B cell (primary cell): ENCODE measurements at regions of chr17 and their contacts with region 1.

Region 1: DNA sequence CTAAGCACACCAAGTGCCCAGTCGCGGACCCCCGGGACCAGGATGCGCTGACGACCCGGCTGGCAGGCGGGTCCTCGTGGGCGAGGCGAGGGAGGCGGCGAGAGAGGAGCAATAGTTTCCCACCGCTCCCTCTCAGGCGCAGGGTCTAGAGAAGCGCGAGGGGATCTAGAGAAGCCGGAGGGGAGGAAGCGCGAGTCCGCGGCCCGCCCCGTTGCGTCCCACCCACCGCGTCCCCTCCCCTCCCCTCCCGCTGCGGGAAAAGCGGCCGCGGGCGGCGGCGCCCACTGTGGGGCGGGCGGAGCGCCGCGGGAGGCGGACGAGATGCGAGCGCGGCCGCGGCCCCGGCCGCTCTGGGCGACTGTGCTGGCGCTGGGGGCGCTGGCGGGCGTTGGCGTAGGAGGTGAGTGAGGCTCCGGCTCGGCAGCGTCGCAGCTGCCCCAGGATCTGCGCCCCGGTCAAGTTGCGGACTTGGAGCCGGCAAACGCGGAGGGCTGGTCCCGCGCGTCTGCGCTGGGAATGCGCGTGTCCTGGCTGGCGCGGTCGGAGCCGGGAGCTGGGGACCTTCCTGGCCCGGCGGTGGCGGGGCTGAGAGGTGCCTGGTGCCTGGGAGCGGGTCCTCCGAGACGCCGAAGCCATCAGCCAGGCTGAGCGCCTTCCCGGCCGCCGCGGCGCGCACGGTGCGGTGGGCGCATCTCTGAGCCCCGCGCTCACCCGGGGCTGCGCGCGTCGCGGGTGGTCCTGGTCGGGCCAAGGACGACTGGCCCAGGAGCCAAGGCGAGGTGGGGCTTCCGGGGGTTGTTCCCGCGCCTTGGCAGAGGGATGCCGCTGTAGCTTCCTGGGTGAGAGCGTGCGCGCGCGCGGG is at the start of gene ITGB3:
- DNase-seq: peak; percentile 88
- ATAC-seq: peak; percentile 98
- H3K4me3 ChIP-seq: peak within 1 kb of the TSS in 4 of 5 experiments; percentile 54 to 71 (median 62)
- H3K4me3 Mint-ChIP-seq: peak within 1 kb of the TSS; percentile 94
- H3K27ac ChIP-seq: no peak within 1 kb of the TSS
- H3K27ac Mint-ChIP-seq: peak within 1 kb of the TSS; percentile 61
- H3K4me1 ChIP-seq: peaks cover 4 to 18% of the 10 kb centered on the region in 2 donors
- H3K4me1 Mint-ChIP-seq: peaks cover 17% of the 10 kb centered on the region
- H3K27me3 ChIP-seq: peaks cover 0 to 11% (median 3%) of the 10 kb centered on the region in 4 experiments
- H3K27me3 Mint-ChIP-seq: peaks cover 7% of the 10 kb centered on the region
- CTCF ChIP-seq: peak; percentile 67
- total RNA-seq, gene ITGB3: 11.4 and 14.2 TPM in 2 replicates

Region 2: GRCh38 chr17:47279062-47279736 is 25.4 kb after region 1 on chr17:
- CTCF ChIA-PET with region 1: interaction called, 3 read pairs
- POLR2A ChIA-PET with region 1: no interaction called
- intact Hi-C with region 1: loop called (anchors 2 kb)
- DNase-seq: peak; percentile 85
- ATAC-seq: peak; percentile 94
- H3K4me3 ChIP-seq: peak overlapping the region in 3 of 5 experiments; percentile 4 to 30 (median 20)
- H3K4me3 Mint-ChIP-seq: peak overlapping the region; percentile 77
- H3K27ac ChIP-seq: peak overlapping the region; percentile 66 to 77
- H3K27ac Mint-ChIP-seq: peak overlapping the region; percentile 84
- H3K4me1 ChIP-seq: peaks cover 45 to 67% of the 10 kb centered on the region in 2 donors
- H3K4me1 Mint-ChIP-seq: peaks cover 69% of the 10 kb centered on the region
- H3K27me3 ChIP-seq: no peaks in the 10 kb centered on the region
- H3K27me3 Mint-ChIP-seq: no peaks in the 10 kb centered on the region
- CTCF ChIP-seq: no peak

Region 3: GRCh38 chr17:47335101-47335936 is 81.5 kb after region 1 on chr17:
- CTCF ChIA-PET with region 1: no interaction called
- POLR2A ChIA-PET with region 1: no interaction called
- intact Hi-C with region 1: no loop called
- DNase-seq: no peak
- ATAC-seq: no peak
- H3K4me3 ChIP-seq: no peak overlapping the region
- H3K4me3 Mint-ChIP-seq: no peak overlapping the region
- H3K27ac ChIP-seq: no peak overlapping the region
- H3K27ac Mint-ChIP-seq: no peak overlapping the region
- H3K4me1 ChIP-seq: no peaks in the 10 kb centered on the region
- H3K4me1 Mint-ChIP-seq: no peaks in the 10 kb centered on the region
- H3K27me3 ChIP-seq: no peaks in the 10 kb centered on the region
- H3K27me3 Mint-ChIP-seq: no peaks in the 10 kb centered on the region
- CTCF ChIP-seq: no peak

Region 4: DNA sequence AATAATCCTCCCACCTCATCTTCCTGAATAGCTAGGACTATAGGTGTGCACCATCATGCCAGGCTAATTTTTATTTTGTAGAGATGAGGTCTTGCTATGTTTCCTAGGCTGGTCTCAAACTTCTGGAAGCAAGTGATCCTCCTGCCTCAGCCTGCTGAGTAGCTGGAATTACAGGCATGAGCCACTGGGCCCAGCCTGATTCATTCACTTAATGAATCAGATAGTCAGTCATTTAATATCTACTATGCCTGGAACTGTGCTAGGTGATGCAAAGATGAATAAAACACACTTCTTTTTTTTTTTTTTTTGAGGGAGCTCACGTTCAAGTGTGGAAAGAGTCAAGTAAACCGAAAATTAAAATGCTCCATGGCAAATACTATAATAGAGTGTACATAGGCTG is 109.4 kb after region 1 on chr17:
- CTCF ChIA-PET with region 1: no interaction called
- POLR2A ChIA-PET with region 1: no interaction called
- intact Hi-C with region 1: no loop called
- DNase-seq: no peak
- ATAC-seq: no peak
- H3K4me3 ChIP-seq: no peak overlapping the region
- H3K4me3 Mint-ChIP-seq: no peak overlapping the region
- H3K27ac ChIP-seq: no peak overlapping the region
- H3K27ac Mint-ChIP-seq: no peak overlapping the region
- H3K4me1 ChIP-seq: no peaks in the 10 kb centered on the region
- H3K4me1 Mint-ChIP-seq: no peaks in the 10 kb centered on the region
- H3K27me3 ChIP-seq: no peaks in the 10 kb centered on the region
- H3K27me3 Mint-ChIP-seq: no peaks in the 10 kb centered on the region
- CTCF ChIP-seq: no peak